Activated CD4-positive, alpha-beta T cell treated with anti-CD3 and anti-CD28 coated beads for 36 hours (primary cell): ENCODE measurements at regions of chr12 and their contacts with region 1.

Region 1: GRCh38 chr12:122951979-122952892 is 14.0 kb downstream of the ABCB9 start:
- DNase-seq: peak; percentile 85
- ATAC-seq: peak; percentile 97
- H3K4me3 Mint-ChIP-seq: no peak overlapping the region
- H3K27ac Mint-ChIP-seq: no peak overlapping the region
- H3K4me1 Mint-ChIP-seq: peaks cover 4% of the 10 kb centered on the region
- H3K27me3 Mint-ChIP-seq: no peaks in the 10 kb centered on the region

Region 2: GRCh38 chr12:122860346-122861090 is 91.7 kb before region 1 on chr12:
- CTCF ChIA-PET with region 1: interaction called, 76 read pairs
- POLR2A ChIA-PET with region 1: no interaction called
- intact Hi-C with region 1: loop called (anchors 1 kb)
- DNase-seq: peak; percentile 91
- ATAC-seq: peak; percentile 85
- H3K4me3 Mint-ChIP-seq: no peak overlapping the region
- H3K27ac Mint-ChIP-seq: no peak overlapping the region
- H3K4me1 Mint-ChIP-seq: no peaks in the 10 kb centered on the region
- H3K27me3 Mint-ChIP-seq: no peaks in the 10 kb centered on the region

Region 3: DNA sequence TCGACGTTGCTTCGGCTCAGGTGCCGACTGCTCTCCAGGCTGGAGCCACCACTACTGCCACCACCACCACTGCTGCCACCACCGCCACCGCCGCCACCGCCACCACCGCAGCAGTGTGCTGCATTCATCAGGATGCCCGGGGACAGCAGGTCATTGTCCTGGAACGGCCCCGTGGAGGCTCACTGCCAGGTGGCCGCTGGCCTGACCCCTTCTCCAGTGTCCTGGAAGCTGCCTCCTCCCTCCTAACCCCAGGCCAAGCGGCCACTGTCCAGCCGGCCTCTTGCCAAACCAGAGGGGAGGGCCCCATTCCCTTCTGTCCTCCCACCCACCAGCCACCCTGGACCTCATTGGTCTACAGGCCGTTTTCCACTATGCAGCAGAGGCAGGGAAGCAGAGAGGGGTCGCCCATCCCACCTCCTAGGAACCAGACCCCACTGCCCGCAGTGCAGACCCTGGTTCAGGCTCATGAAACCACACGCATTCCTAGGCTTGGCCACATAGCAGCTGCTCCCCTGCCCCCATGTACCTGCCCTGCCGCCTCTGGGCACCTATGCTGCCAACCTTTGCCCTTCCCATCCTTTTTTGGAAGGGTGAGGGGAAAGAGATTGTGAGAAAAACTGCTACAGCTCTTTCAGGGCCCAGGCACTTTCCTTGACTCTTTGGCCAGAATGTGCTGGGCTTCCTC is 43.4 kb after region 1 on chr12:
- CTCF ChIA-PET with region 1: no interaction called
- POLR2A ChIA-PET with region 1: no interaction called
- intact Hi-C with region 1: no loop called
- DNase-seq: no peak
- ATAC-seq: no peak
- H3K4me3 Mint-ChIP-seq: no peak overlapping the region
- H3K27ac Mint-ChIP-seq: no peak overlapping the region
- H3K4me1 Mint-ChIP-seq: peaks cover 6% of the 10 kb centered on the region
- H3K27me3 Mint-ChIP-seq: no peaks in the 10 kb centered on the region